HEK293 (cell line): ENCODE measurements at regions of chr2 and their contacts with region 1.

Region 1: DNA sequence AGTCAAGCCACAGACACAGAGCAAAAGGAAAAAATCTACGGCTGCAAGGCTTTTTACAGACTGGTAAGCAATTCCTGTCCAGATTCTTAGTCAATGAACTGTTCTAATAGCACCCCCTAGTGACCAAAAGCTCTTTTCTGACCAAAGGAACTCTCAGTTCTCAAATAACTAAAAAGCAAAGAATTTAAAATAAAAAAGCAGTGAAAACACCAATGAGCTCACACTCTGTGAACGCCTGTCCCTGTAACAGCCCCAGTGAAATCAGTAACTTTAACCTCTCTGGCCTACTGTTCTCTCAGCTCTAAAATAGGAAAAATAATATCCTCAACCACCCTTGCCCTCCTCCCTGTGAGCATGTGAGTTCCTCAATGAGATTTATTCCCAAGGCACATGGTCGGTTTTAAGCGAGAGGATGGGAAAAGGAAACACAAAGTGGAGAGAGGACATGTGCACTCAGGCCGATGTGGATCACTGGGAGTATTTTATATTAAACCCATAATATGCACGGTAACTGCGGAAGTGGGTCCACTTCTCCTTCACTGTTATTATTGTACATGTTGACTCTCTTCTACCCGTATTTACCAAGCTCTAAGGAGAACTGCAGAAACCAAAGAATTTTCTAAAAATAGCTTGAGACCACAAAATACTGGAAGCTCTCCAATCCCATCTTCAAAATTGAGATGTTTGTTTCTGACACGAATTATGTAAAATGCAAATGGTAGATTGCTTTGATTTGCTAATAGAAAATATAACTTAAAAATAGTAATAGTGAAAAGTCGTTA is 128.5 kb downstream of the STK39 start:
- H3K4me3 ChIP-seq: no peak overlapping the region
- H3K27ac ChIP-seq: no peak overlapping the region
- H3K4me1 ChIP-seq: no peaks in the 10 kb centered on the region
- CTCF ChIP-seq: peak; percentile 51; the same call in 1 of the 2 replicates

Region 2: GRCh38 chr2:167342769-167343168 is 776.2 kb before region 1 on chr2:
- CTCF ChIA-PET with region 1: interaction called, 11 read pairs
- POLR2A ChIA-PET with region 1: no interaction called
- H3K4me3 ChIP-seq: no peak overlapping the region
- H3K27ac ChIP-seq: no peak overlapping the region
- H3K4me1 ChIP-seq: no peaks in the 10 kb centered on the region
- CTCF ChIP-seq: no peak

Region 3: DNA sequence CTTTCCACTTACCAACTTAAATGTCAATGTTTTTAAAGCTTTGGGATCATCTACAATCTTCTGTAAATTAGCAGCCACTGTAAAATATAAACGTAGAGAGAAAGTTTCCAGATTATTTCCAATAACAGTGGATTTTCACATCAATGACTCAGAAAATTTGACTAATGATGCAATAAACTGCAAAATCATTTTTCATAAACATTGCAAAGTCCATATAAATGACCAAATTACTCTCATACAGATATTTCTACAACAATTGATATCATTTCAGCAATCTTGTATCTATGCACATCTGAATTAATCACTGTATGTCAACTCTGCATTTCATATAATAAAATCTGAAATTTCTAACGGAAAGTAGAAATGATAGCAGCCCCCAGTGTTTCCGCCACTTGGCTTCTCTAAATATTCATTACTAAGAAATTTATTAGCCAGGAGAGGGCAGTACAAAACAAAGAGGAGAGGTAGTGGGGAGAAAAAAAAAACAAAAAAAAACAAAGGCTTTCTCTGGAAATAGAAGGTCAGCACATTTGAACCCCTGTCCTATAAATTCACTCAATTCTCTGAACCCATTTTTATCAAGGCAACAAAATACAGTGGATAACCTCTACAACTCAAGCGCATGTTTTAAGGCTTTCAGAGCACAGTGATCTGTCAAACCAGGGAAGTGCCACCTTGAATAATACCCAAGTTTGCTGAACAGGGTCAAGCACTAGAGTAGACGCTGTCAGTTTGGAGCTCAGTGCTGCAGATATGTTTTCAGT is 154.1 kb before region 1 on chr2:
- CTCF ChIA-PET with region 1: interaction called, 10 read pairs
- POLR2A ChIA-PET with region 1: no interaction called
- H3K4me3 ChIP-seq: no peak overlapping the region
- H3K27ac ChIP-seq: no peak overlapping the region
- H3K4me1 ChIP-seq: no peaks in the 10 kb centered on the region
- CTCF ChIP-seq: no peak

Region 4: DNA sequence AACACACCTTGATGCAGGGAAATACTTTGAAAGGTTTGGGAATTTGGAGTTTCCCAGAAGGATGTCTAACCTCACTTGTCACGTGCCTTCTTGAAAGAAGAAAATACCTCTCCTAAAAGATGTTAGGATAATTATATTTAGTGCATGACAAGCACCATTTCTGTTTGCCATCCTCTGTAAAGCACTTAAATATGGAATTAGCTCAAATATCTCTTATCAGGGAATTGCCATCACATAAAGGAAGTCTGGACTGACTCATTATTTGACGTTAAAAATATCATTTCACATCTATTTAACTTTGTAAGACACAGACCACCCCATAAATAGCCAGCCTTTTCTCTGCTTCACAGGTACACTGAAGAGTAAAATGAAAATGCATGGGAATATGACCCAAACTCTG is 11.6 kb before region 1 on chr2:
- CTCF ChIA-PET with region 1: interaction called, 27 read pairs
- POLR2A ChIA-PET with region 1: no interaction called
- H3K4me3 ChIP-seq: no peak overlapping the region
- H3K27ac ChIP-seq: no peak overlapping the region
- H3K4me1 ChIP-seq: no peaks in the 10 kb centered on the region
- CTCF ChIP-seq: no peak

Region 5: GRCh38 chr2:168143813-168144212 is 24.9 kb after region 1 on chr2:
- CTCF ChIA-PET with region 1: interaction called, 10 read pairs
- POLR2A ChIA-PET with region 1: no interaction called
- H3K4me3 ChIP-seq: no peak overlapping the region
- H3K27ac ChIP-seq: no peak overlapping the region
- H3K4me1 ChIP-seq: 0 out of 2 replicates have a peak, but pooled peaks cover 2% of the 10 kb centered on the region
- CTCF ChIP-seq: no peak